AG04449 (cell line): ENCODE measurements at regions of chr15 and their contacts with region 1.

Region 1: GRCh38 chr15:88904624-88905327 is 8.4 kb downstream of the MFGE8 start:
- DNase-seq: no peak
- H3K4me3 ChIP-seq: no peak overlapping the region
- CTCF ChIP-seq: peak; percentile 91

Region 2: GRCh38 chr15:88657326-88658069 is 247.3 kb before region 1 on chr15:
- CTCF ChIA-PET with region 1: interaction called, 36 read pairs
- POLR2A ChIA-PET with region 1: interaction called, 3 read pairs
- DNase-seq: no peak
- H3K4me3 ChIP-seq: no peak overlapping the region
- CTCF ChIP-seq: peak; percentile 86

Region 3: DNA sequence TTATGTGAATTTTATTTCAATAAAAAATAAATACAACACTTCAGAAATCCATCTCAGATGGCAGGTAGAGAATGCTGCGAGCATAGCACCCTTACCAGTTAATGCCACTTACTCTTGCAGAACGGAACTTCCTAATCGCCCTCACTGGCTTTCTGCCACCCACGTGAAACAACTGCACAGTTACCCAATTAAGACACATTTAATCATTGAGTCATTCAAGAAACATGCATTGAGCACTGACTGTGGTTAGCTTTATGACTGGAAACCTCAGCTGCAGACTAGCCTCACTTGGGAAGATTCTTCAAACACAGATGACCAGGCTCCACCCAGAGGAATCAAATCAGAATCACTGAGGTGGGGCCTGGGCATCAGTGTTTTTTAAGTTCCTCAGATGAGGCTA is 14.0 kb after region 1 on chr15:
- CTCF ChIA-PET with region 1: interaction called, 29 read pairs
- POLR2A ChIA-PET with region 1: interaction called, 9 read pairs
- DNase-seq: peak; percentile 99
- H3K4me3 ChIP-seq: no peak overlapping the region
- CTCF ChIP-seq: no peak

Region 4: DNA sequence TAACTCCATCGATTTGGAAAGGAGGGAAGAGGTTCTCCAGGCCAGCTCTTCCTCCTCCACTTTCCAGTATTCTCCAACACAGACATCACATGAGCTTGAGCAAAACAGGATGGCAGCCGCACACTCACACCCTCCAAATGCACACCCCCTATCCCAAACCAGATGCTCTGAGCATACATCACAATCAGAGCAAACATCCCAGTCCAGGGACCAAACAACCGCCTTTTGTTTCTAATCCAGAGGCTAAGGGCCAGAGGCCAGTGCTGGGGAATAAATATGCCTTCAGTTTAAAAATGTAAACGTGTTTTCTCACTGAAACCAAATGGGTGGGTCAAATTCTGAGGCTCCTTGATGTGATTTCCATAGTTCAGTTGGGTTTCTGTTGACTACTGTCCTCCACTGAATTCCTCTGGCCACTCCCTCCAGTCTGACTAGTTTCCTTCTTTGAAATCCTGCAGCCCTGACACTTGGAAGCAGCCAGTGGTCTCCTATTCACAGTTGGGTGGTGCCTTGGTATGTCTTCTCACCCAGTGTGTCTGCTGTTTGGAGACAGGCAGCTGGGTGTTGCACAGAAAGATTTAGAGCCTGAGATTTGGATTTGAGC is 27.6 kb after region 1 on chr15:
- CTCF ChIA-PET with region 1: no interaction called
- POLR2A ChIA-PET with region 1: no interaction called
- DNase-seq: no peak
- H3K4me3 ChIP-seq: no peak overlapping the region
- CTCF ChIP-seq: no peak

Region 5: GRCh38 chr15:88954431-88955277 is 49.9 kb after region 1 on chr15:
- CTCF ChIA-PET with region 1: no interaction called
- POLR2A ChIA-PET with region 1: no interaction called
- DNase-seq: peak; percentile 23
- H3K4me3 ChIP-seq: no peak overlapping the region
- CTCF ChIP-seq: no peak

Region 6: GRCh38 chr15:88995449-88995848 is 90.7 kb after region 1 on chr15:
- CTCF ChIA-PET with region 1: interaction called, 176 read pairs
- POLR2A ChIA-PET with region 1: interaction called, 3 read pairs
- DNase-seq: no peak
- H3K4me3 ChIP-seq: no peak overlapping the region
- CTCF ChIP-seq: no peak

Region 7: GRCh38 chr15:89034288-89034687 is 129.5 kb after region 1 on chr15:
- CTCF ChIA-PET with region 1: interaction called, 18 read pairs
- POLR2A ChIA-PET with region 1: no interaction called
- DNase-seq: no peak
- H3K4me3 ChIP-seq: no peak overlapping the region
- CTCF ChIP-seq: peak; percentile 43

Region 8: DNA sequence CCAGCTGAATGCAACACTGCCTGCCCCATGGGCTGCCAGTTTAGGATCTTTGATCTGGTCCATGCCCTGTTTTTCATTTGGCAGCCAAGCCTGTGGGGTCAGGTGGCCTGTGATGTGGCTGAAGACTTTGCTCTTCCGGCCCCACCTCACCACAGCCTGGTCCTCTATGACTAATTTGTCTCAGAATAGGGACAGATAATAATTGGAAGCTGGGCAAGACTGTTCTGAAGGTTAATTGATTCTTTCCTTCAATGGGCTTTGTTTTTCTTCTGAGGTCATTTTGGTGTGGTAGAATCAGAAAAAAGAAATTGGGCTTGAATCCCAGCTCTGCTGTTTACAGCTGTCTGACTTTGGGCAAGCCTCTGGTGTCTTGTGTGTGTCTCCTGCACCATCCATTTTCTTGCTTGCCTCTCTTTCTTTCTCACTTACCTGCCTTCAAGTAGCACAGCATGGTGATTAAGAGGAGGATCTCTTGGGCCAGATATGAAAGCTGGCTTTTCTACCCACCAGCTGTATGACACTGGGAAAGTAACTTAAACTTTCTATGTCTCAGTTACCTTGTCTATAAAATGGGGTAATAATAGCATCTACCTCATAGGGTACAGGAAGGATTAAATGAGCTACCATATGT is 207.7 kb after region 1 on chr15:
- CTCF ChIA-PET with region 1: interaction called, 11 read pairs
- POLR2A ChIA-PET with region 1: no interaction called
- DNase-seq: no peak
- H3K4me3 ChIP-seq: no peak overlapping the region
- CTCF ChIP-seq: no peak